ENCODE measurements at regions of chr7 and their contacts with region 1.

Region 1: DNA sequence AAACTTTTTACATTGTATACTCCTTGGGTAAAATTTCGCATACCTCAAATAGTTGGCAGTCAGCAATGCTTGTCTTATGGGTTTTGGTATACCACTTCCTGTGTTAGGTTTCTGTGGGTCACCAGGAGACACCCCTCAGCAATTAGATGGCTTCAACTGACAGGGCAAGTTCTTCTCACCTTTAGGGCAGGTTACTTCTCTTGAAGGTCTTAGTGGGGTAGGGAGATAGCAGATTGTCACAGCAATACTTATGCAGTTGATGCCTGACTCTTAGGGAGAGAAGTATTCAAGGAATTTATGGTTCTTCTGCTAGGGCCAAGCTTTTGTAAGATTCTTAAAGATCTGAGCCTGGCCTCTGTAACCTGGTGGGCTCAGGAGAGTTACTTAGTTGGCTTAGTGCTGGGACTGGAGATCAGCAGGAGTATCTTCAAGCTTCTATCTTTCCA is 42.9 kb downstream of the MKLN1 start:
- DNase-seq: peak; percentile 40
- H3K4me3 Mint-ChIP-seq: no peak overlapping the region
- H3K27ac Mint-ChIP-seq: no peak overlapping the region
- H3K4me1 Mint-ChIP-seq: peaks cover 69% of the 10 kb centered on the region
- H3K27me3 Mint-ChIP-seq: no peaks in the 10 kb centered on the region

Region 2: GRCh38 chr7:131188367-131189339 is 181.9 kb before region 1 on chr7:
- CTCF ChIA-PET with region 1: no interaction called
- POLR2A ChIA-PET with region 1: no interaction called
- intact Hi-C with region 1: loop called (anchors 2 kb)
- DNase-seq: peak; percentile 68
- H3K4me3 Mint-ChIP-seq: peak overlapping the region; percentile 45
- H3K27ac Mint-ChIP-seq: peak overlapping the region; percentile 90
- H3K4me1 Mint-ChIP-seq: peaks cover 54% of the 10 kb centered on the region
- H3K27me3 Mint-ChIP-seq: no peaks in the 10 kb centered on the region

Region 3: GRCh38 chr7:131293018-131293417 is 77.5 kb before region 1 on chr7:
- CTCF ChIA-PET with region 1: no interaction called
- POLR2A ChIA-PET with region 1: no interaction called
- intact Hi-C with region 1: no loop called
- DNase-seq: no peak
- H3K4me3 Mint-ChIP-seq: no peak overlapping the region
- H3K27ac Mint-ChIP-seq: no peak overlapping the region
- H3K4me1 Mint-ChIP-seq: no peaks in the 10 kb centered on the region
- H3K27me3 Mint-ChIP-seq: no peaks in the 10 kb centered on the region

Region 4: DNA sequence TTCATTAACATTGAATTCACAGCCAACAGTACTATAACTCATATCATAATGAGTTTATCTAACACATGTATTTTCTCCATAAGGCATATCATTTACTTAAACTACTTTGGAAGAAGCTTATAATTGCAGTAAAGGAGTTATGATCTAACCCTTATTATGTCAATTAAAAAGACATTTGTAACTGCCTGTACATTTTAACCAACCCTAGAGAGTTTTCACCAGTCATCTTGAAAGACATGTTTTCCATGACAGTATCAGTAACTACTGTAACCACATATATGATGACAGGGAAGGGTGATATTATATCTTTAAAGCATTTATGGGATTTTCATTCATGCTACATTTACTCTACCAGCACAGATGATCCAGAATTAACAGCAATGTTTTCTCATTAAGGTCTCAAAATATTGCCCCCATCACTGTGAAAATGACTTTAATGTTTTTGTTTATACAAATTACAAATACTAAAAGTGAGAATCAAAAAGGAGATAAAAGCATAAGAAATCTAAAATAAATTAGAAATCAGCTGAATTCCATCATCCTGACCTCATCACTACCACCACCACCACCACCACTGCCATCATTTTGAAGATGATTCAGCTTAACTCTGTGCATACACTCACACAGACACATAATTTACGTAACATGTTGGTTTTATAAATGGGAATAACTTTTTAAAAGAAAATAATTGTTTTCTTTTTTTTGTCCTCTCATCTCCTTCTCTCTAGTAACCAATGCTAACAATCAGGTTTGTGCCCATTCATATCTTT is 10.7 kb after region 1 on chr7:
- CTCF ChIA-PET with region 1: interaction called, 3 read pairs
- POLR2A ChIA-PET with region 1: no interaction called
- intact Hi-C with region 1: loop called (anchors 1 kb)
- DNase-seq: no peak
- H3K4me3 Mint-ChIP-seq: no peak overlapping the region
- H3K27ac Mint-ChIP-seq: no peak overlapping the region
- H3K4me1 Mint-ChIP-seq: peaks cover 34% of the 10 kb centered on the region
- H3K27me3 Mint-ChIP-seq: no peaks in the 10 kb centered on the region